ENCODE measurements at regions of chr1 and their contacts with region 1.

Region 1: DNA sequence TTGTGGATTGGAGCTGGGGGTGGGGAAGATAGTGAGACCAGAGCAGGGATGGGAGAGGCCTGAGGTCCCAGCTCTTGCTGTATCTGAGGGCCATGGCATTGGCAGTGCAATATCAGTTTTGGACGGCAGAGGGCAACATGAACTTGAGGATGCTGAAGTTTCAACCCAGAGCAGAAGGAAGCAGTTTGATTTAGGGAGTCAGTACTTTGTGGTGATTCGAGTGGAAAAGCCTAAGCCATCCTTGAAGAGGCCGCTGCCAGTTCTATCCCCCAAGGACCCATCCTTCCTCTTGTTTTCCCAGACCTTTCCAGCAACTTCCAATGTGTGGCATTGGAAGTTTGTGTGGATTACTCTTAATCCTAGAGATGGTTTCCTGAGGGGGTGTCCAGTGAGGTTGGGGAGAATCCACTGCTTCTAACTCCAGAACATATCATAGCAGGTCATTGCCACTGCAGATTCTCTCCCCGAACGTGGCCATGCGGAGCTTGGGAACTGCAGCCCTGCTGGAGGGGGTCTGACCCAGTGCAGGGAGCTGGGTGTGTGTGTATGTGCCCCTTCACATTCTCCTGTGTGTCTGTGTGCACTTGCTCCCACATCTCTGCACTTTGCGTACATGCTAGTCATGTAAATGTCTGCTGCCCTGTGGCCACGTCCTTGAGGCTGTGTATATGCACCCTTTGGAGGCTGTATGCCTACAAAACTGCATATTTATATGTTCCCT is 24.1 kb downstream of the SLC26A9 start:
- DNase-seq: peak; percentile 66
- H3K4me3 ChIP-seq: no peak overlapping the region
- H3K27ac ChIP-seq: no peak overlapping the region
- H3K4me1 ChIP-seq: no peaks in the 10 kb centered on the region
- H3K27me3 ChIP-seq: no peaks in the 10 kb centered on the region
- CTCF ChIP-seq: peak; percentile 83 to 93

Region 2: DNA sequence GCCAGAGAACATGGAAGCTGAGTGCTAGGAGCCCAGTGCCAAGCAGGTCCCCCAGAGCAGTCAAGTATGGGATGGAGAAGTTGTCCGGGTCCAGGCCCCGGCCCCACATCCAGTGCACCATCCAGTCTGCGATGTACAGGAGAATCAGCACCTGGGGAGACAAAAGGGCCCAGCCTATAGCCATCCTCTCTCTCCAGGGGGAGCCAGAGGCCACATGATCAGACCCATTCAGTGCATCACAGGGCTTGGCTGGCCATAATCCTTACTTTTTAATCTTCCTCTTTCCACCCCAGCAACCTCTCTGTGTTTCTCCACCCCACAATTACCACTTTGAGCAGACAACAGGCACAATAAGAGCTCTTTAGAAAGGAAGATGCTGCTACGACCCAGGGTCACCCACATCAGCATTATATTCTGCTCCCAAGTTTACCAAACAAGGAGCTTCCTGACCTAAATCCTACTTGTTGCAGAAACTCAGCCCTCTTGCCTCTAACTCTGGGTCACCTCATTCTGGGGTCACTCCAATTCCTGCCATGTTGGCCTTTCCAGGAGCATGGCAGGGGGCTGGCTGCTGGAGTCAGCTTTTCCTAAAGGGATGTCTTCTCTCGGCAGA is 127.5 kb before region 1 on chr1:
- CTCF ChIA-PET with region 1: interaction called, 10 read pairs
- dilution Hi-C with region 1: no loop called
- in situ Hi-C with region 1: loop called in 1 of 2 experiments (anchors 5 kb)
- intact Hi-C with region 1: loop called (anchors 1 kb)
- DNase-seq: peak; percentile 42
- H3K4me3 ChIP-seq: no peak overlapping the region
- H3K27ac ChIP-seq: no peak overlapping the region
- H3K4me1 ChIP-seq: no peaks in the 10 kb centered on the region
- H3K27me3 ChIP-seq: no peaks in the 10 kb centered on the region
- CTCF ChIP-seq: peak; percentile 89 to 90

Region 3: GRCh38 chr1:205870236-205870635 is 49.0 kb before region 1 on chr1:
- CTCF ChIA-PET with region 1: no interaction called
- dilution Hi-C with region 1: no loop called
- in situ Hi-C with region 1: no loop called
- intact Hi-C with region 1: no loop called
- DNase-seq: no peak
- H3K4me3 ChIP-seq: no peak overlapping the region
- H3K27ac ChIP-seq: no peak overlapping the region
- H3K4me1 ChIP-seq: no peaks in the 10 kb centered on the region
- H3K27me3 ChIP-seq: peaks cover 3% of the 10 kb centered on the region
- CTCF ChIP-seq: no peak

Region 4: GRCh38 chr1:205961405-205961804 is 42.2 kb after region 1 on chr1:
- CTCF ChIA-PET with region 1: no interaction called
- dilution Hi-C with region 1: no loop called
- in situ Hi-C with region 1: loop called in 1 of 2 experiments (anchors 10 kb)
- intact Hi-C with region 1: no loop called
- DNase-seq: no peak
- H3K4me3 ChIP-seq: no peak overlapping the region
- H3K27ac ChIP-seq: no peak overlapping the region
- H3K4me1 ChIP-seq: peaks cover 13% of the 10 kb centered on the region
- H3K27me3 ChIP-seq: peaks cover 5% of the 10 kb centered on the region
- CTCF ChIP-seq: no peak

Region 5: DNA sequence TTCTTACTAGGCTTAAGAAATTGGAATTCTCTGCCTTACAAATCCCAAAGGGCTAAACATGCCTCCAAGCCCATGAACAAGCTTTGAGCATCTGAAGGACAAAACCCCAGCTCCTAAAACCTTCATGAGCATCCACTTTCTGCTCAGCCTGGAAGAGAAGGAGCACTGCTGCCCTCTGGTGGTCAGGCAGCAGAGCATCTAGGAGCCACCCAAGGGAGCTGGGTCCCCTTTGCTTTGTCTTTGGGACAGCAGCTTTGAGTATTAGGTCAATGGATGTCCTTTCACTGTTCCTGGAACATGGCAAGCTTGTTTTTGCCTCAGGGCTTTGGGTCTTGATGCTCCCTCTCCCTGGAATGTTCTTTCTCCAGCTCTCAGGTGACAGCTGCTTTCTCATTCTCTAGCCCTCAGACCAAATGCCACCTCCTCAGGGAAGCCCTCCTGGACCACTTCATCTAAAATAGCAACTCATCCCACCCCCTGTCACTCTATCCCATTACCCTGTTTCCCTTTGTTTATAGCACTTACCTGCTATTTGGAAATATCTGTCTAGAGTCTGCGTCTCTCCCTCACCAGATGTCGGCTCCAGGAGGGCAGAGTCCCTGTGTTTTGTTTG is 58.3 kb after region 1 on chr1:
- CTCF ChIA-PET with region 1: interaction called, 118 read pairs
- dilution Hi-C with region 1: no loop called
- in situ Hi-C with region 1: loop called (anchors 5 kb)
- intact Hi-C with region 1: loop called (anchors 1 kb)
- DNase-seq: peak; percentile 54
- H3K4me3 ChIP-seq: no peak overlapping the region
- H3K27ac ChIP-seq: no peak overlapping the region
- H3K4me1 ChIP-seq: no peaks in the 10 kb centered on the region
- H3K27me3 ChIP-seq: no peaks in the 10 kb centered on the region
- CTCF ChIP-seq: peak; percentile 98 to 99

Region 6: GRCh38 chr1:205983925-205984725 is 64.9 kb after region 1 on chr1:
- CTCF ChIA-PET with region 1: no interaction called
- dilution Hi-C with region 1: no loop called
- in situ Hi-C with region 1: loop called (anchors 5 kb)
- intact Hi-C with region 1: no loop called
- DNase-seq: peak; percentile 96
- H3K4me3 ChIP-seq: peak overlapping the region in 1 of 3 experiments; percentile 2
- H3K27ac ChIP-seq: no peak overlapping the region
- H3K4me1 ChIP-seq: peaks cover 32% of the 10 kb centered on the region
- H3K27me3 ChIP-seq: no peaks in the 10 kb centered on the region
- CTCF ChIP-seq: peak; percentile 79 to 90

Region 7: DNA sequence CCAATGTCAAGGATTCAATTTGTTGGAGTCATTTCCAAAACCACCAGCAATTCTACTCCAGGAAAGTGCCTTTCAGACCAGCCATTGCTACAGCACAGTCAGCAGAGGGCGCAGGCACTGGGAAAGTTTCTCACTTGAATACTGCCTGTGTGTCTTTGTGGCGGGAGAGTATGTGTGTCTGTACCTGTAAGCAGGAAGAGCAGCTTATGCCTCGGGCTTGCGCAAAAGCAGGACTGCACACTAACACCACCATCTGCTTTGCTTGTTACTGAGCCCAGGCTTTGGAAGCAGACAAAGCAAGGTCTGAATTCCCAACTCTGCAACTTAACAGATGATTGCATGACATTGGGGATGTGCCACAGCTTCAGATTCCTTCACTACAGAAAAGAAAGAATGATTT is 111.5 kb after region 1 on chr1:
- CTCF ChIA-PET with region 1: no interaction called
- dilution Hi-C with region 1: no loop called
- in situ Hi-C with region 1: no loop called
- intact Hi-C with region 1: loop called (anchors 2 kb)
- DNase-seq: peak; percentile 90
- H3K4me3 ChIP-seq: no peak overlapping the region
- H3K27ac ChIP-seq: no peak overlapping the region
- H3K4me1 ChIP-seq: peaks cover 19% of the 10 kb centered on the region
- H3K27me3 ChIP-seq: no peaks in the 10 kb centered on the region
- CTCF ChIP-seq: peak; percentile 96 to 99